GM18951 (cell line): ENCODE measurements at regions of chr10 and their contacts with region 1.

Region 1: DNA sequence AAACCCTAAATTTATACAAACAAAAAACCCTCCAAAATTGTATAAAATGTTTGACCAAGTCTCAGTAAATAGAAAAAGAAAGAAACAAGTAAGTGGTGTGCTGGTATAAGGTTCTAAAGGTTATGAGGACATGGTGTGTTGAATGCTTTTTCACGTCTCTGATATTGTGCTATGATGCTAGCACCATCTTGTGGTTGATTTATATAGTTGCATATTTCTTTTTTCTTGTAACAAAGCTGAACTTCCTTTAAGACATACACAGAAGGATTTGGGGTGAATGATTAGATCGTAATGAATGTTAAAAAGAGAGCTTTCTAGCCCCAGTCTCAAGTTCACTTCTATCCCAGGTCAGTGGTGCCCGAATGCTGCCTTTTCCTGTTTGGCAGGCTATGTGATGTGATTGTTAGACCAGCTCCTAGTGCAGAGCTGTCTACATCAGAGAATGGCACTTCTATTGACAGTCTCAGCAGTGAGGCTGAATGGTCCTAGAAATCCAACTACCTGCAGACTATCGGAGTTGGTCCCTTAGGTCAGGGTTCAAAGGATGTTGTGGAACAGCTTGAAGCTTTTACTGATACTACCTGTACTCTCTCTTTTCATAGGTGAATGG is 25.0 kb downstream of the VTI1A start:
- POLR2A ChIP-seq: no peak

Region 2: GRCh38 chr10:113385021-113385999 is 913.3 kb after region 1 on chr10:
- in situ Hi-C with region 1: loop called (anchors 25 kb)
- POLR2A ChIP-seq: no peak